Psoas muscle (tissue), 8 donors: ENCODE measurements at regions of chr18 and their contacts with region 1.

Region 1: DNA sequence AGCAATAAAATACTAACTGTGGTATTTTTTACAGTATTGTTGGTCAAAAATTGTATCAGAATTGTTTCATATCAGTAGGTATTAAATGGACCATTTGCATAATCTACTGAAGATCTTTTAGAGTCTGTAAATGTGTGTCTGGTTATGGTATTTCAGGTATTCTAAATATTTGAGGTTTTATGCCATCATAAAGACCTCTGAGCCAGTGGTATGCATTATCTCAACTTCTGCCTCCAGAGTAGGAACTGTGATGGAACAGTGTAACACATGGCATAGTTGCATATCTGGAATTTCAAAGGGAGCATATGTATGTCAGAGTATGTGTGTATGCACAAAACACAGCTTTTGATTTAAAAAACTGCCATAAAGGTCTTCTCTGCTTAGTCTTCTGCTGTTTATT is 15.4 kb downstream of the GREB1L start:
- DNase-seq: no peak
- ATAC-seq: no peak
- H3K4me3 ChIP-seq: no peak overlapping the region
- H3K27ac ChIP-seq: no peak overlapping the region
- H3K4me1 ChIP-seq: no peaks in the 10 kb centered on the region
- H3K27me3 ChIP-seq: no peaks in the 10 kb centered on the region
- CTCF ChIP-seq: no peak

Region 2: GRCh38 chr18:21203096-21203495 is 54.3 kb before region 1 on chr18:
- intact Hi-C with region 1: loop called in 1 of 2 experiments (anchors 10 kb)
- DNase-seq: no peak
- ATAC-seq: no peak
- H3K4me3 ChIP-seq: no peak overlapping the region
- H3K27ac ChIP-seq: no peak overlapping the region
- H3K4me1 ChIP-seq: no peaks in the 10 kb centered on the region
- H3K27me3 ChIP-seq: no peaks in the 10 kb centered on the region
- CTCF ChIP-seq: no peak

Region 3: DNA sequence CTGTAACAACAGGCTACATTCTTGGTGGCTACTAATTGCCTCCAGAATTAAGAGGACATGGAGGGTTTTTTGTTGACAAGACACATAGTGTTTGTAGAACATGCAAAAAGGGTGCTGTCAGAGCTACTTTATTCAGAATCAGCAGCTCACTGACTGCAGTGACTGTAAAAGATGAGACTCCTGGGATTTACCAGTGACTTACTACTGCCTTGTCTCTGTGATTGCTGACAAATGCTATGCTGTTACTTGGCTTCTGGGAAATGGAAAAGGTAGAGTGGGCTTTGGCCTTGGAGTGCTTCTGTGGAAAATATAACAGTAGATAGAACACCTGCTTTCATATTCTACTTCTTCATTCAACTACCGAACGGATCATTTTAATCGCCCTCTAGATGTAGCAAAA is 32.4 kb after region 1 on chr18:
- intact Hi-C with region 1: loop called in 1 of 2 experiments (anchors 5 kb)
- DNase-seq: no peak
- ATAC-seq: no peak
- H3K4me3 ChIP-seq: no peak overlapping the region
- H3K27ac ChIP-seq: no peak overlapping the region
- H3K4me1 ChIP-seq: no peaks in the 10 kb centered on the region
- H3K27me3 ChIP-seq: no peaks in the 10 kb centered on the region
- CTCF ChIP-seq: no peak